ENCODE measurements at regions of chr18 and their contacts with region 1.

Region 1: DNA sequence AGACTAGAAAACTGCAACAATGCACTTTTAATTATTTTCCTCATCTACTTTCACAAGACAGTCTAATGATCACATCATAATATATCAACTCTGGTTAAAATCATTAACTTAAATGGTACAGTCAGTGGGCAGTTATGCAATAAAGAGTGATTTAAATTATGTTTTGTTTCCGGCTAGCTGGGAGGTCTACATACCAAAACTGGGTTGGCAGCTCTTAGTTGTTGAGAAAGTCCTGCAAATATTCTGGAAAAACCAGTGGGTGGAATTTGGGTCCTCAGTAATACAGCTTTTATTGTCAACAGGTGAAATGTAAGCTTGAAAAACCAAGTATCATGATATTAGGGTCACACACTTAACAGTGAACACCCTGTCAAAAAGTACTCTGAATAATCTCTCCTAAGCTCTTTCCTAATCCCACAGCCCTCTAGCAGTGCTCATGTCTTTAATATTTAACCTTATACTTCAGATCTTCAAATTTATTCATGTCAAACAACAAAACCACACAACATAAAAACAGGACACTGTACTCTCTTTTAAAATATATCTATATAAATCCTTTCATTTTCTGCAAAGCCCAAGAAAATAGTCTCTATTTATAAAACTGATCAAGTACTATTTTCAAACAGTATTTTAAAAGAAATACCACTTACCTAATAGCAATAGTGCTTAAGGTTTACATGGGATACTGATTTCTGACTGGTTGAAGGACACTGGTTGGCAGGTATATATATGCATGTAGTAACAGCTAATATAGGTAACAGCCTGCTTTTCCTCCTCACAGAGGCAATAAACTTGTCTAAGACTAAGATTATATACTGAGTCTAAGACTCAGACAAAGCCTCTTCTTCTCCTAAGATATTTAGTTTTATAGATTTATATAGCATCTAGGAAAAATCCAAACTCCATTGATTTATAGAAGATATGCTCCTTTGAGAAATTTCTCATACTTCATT is 103.8 kb downstream of the GAREM1 start:
- DNase-seq: peak; percentile 52
- H3K4me3 ChIP-seq: no peak overlapping the region
- H3K27ac ChIP-seq: no peak overlapping the region
- H3K4me1 ChIP-seq: peaks cover 12% of the 10 kb centered on the region
- H3K27me3 ChIP-seq: no peaks in the 10 kb centered on the region

Region 2: GRCh38 chr18:32425466-32425865 is 58.6 kb after region 1 on chr18:
- in situ Hi-C with region 1: loop called (anchors 10 kb)
- DNase-seq: peak; percentile 57
- H3K4me3 ChIP-seq: no peak overlapping the region
- H3K27ac ChIP-seq: 0 out of 2 replicates have a peak overlapping the region, but pooled peaks have one; percentile 7
- H3K4me1 ChIP-seq: peaks cover 21% of the 10 kb centered on the region
- H3K27me3 ChIP-seq: no peaks in the 10 kb centered on the region

Measured in GM23248 (cell line).